ENCODE measurements at regions of chr19 and their contacts with region 1.

Region 1: DNA sequence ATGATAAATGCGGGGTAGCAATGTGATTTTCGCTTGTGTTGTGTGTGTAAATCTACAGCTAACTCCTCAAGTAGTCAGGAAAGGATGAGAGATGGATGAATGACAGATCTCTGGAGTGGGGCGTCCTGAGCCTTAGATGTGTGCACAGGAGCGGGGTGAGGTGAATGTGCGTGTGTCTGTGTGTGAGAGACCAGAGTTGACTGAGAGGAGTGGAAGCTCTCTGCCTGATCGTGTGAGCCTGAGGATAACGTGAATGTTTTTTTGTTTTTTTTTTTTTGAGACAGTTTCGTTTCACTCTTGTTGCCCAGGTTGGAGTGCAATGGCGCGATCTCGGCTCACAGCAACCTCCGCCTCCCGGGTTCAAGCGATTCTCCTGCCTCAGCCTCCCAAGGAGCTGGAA is 805 bp downstream of the ZNF461 start:
- DNase-seq: peak; percentile 31
- ATAC-seq: no peak
- H3K4me3 ChIP-seq: peak overlapping the region; percentile 63 to 91 (median 80)
- H3K4me3 Mint-ChIP-seq: peak overlapping the region; percentile 98
- H3K27ac ChIP-seq: peak overlapping the region in 1 of 2 donors; percentile 81
- H3K27ac Mint-ChIP-seq: peak overlapping the region; percentile 90
- H3K4me1 ChIP-seq: peaks cover 15 to 19% of the 10 kb centered on the region in 2 donors
- H3K4me1 Mint-ChIP-seq: peaks cover 28% of the 10 kb centered on the region
- H3K27me3 ChIP-seq: no peaks in the 10 kb centered on the region
- H3K27me3 Mint-ChIP-seq: no peaks in the 10 kb centered on the region
- CTCF ChIP-seq: no peak

Region 2: DNA sequence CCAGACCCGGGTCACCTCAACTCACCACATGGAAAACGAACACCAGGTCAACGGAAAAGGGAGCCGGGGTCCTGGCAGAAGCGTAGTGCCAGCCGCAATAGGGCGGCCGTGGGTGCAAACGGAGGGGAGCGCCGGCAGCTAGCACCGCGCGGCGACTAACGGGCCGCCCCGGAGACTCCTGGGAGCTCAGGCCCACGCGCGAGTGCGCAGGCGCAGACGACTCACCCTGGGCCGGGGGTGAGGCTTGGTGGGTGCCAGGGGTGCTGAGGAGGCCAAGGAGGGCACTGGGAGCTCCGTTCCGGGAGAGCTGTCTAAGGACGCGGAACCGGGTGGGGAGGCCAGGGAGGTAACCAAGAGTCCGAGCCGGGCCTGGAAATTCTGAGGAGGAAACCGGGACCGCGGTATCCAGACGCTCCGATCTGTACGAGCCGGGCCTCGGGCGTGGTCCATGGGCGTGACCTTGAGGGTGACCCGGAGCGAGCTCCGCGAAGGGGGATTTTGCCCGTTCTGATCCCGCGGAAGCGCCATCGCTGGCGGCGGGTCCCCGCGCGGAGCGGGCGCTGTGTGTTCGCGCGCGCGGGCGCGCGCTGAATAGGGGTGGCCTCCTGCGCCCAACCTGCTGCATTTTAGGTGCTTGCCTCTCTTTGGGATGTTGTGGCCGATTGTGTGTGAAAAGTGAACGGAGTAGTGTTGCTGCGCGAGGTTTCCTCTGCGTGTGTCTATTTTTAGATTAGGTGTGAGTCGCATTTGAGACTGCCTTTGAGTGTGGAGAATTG is 60.5 kb before region 1 on chr19 and contains the start of gene ZNF382:
- CTCF ChIA-PET with region 1: no interaction called
- POLR2A ChIA-PET with region 1: no interaction called
- intact Hi-C with region 1: loop called (anchors 2 kb)
- DNase-seq: peak; percentile 91
- ATAC-seq: peak; percentile 77
- H3K4me3 ChIP-seq: peak within 1 kb of the TSS; percentile 24 to 96 (median 91)
- H3K4me3 Mint-ChIP-seq: peak within 1 kb of the TSS; percentile 97
- H3K27ac ChIP-seq: peak within 1 kb of the TSS; percentile 94 to 98
- H3K27ac Mint-ChIP-seq: peak within 1 kb of the TSS; percentile 96
- H3K4me1 ChIP-seq: peaks cover 12 to 16% of the 10 kb centered on the region in 2 donors
- H3K4me1 Mint-ChIP-seq: peaks cover 24% of the 10 kb centered on the region
- H3K27me3 ChIP-seq: no peaks in the 10 kb centered on the region
- H3K27me3 Mint-ChIP-seq: no peaks in the 10 kb centered on the region
- CTCF ChIP-seq: no peak
- total RNA-seq, gene ZNF382: 24.7 and 24.8 TPM in 2 replicates

Region 3: DNA sequence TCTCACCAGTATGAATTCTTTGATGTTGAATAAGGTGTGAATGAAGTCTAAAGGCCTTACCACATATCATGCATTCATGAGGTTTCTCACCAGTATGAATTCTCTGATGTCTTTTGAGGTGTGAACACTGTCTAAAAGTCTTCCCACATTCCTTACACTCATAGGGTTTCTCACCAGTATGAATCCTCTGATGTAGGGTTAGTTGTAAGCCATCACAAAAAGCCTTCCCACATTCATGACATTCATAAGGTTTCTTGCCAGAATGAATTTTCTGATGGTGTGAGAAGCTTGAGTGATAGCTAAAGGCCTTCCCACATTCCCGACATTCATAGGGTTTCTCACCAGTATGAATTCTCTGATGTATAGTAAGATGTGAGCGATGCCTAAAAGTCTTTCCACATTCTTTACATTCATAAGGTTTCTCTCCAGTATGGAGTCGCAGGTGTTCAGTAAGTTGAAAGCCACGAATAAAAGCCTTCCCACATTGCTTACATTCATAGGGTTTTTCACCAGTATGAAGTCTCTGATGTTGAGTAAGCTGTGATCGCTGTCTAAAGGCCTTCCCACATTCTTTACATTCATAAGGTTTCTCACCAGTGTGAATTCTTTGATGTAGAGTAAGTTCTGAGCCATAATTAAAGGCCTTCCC is 26.8 kb before region 1 on chr19:
- CTCF ChIA-PET with region 1: no interaction called
- POLR2A ChIA-PET with region 1: interaction called, 13 read pairs
- intact Hi-C with region 1: no loop called
- DNase-seq: no peak
- ATAC-seq: no peak
- H3K4me3 ChIP-seq: no peak overlapping the region
- H3K4me3 Mint-ChIP-seq: no peak overlapping the region
- H3K27ac ChIP-seq: no peak overlapping the region
- H3K27ac Mint-ChIP-seq: no peak overlapping the region
- H3K4me1 ChIP-seq: no peaks in the 10 kb centered on the region
- H3K4me1 Mint-ChIP-seq: no peaks in the 10 kb centered on the region
- H3K27me3 ChIP-seq: no peaks in the 10 kb centered on the region
- H3K27me3 Mint-ChIP-seq: no peaks in the 10 kb centered on the region
- CTCF ChIP-seq: no peak

Measured in B cell (primary cell).